ENCODE measurements at regions of chr11 and their contacts with region 1.

Region 1: DNA sequence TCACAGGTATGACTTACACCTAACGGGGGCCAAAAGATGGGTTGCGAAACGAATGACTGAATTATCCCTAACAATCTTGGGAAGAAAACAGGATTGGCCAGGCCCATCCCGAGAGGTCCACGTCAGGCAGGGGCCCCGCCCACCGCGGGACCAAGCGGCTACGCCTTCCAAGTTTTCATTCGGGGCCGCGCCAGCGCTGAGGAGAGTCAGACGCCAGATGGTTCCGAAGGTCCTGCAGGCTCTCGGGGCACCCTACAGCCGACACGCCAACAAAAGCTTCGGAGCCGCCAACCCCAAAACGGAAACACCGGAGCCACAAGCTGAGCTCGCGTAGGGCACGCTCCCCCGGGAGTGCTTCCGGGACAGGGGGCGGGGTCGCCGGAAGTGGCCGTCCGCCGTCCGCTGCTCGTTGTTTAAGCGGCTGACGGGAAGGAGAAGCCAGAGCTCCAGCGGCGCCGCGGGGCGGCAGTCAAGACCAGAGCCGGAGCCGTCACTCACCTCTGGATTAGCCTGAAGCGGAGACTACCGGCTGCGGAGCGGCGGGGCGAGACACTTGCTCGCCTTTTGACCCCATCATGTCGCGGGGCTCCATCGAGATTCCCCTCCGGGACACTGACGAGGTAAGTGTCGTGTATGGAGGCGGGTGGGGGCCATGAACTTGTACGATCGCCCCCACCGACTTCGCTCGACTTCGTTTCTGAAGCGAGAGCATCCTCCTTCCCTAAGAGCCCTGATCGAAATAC is at the start of gene CTR9:
- DNase-seq: peak; percentile 98
- H3K4me3 Mint-ChIP-seq: peak within 1 kb of the TSS; percentile 95
- H3K27ac Mint-ChIP-seq: peak within 1 kb of the TSS; percentile 89
- H3K4me1 Mint-ChIP-seq: peaks cover 32% of the 10 kb centered on the region
- H3K27me3 Mint-ChIP-seq: no peaks in the 10 kb centered on the region
- total RNA-seq, gene CTR9: 43.9 and 44.3 TPM in 2 replicates

Region 2: GRCh38 chr11:9565822-9566560 is 1185.0 kb before region 1 on chr11:
- intact Hi-C with region 1: loop called (anchors 10 kb)
- DNase-seq: peak; percentile 88
- H3K4me3 Mint-ChIP-seq: peak overlapping the region; percentile 52
- H3K27ac Mint-ChIP-seq: peak overlapping the region; percentile 85
- H3K4me1 Mint-ChIP-seq: peaks cover 20% of the 10 kb centered on the region
- H3K27me3 Mint-ChIP-seq: peaks cover 2% of the 10 kb centered on the region

Region 3: DNA sequence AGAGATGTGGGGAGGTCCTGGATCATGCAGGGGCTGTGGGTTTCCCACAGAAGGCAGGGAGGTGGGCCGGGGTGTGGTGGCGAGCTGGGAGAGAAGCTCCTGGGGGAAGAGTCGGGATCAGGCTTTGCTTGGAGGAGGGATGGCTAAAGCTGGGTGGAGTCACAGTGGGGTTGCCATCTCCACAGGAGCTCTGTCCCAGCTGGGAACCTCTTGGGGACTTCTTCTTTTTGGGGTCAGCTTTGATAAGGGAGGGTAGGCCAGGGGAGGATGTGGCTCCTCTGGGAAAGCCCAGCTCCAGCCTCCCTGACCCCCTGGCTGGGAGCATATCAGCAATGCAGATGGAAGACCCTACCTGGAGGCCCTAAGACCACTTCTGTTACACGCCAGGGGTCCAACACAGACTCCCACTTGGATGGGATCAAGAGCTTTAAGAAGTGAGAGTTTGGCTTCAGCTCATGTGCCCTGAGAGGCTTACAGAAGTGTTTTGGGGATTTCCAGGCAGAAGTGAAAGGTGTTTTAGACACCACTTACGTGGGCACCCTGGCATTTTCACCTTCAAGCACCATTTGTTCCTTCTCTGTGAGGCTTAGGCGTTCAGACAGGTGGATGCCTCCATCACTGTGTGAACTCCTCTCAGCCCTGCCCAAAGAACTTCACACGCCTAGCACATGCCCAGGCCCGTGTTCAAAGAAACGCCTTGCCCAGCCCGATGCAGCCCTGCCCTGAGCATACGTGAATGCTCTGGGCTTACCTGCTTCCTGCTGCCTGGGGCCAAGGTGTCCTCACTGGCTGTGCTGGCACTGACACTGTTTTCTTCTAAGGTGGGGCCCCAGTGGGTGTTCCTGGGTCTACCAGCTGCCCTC is 262.2 kb before region 1 on chr11:
- intact Hi-C with region 1: no loop called
- DNase-seq: no peak
- H3K4me3 Mint-ChIP-seq: no peak overlapping the region
- H3K27ac Mint-ChIP-seq: peak overlapping the region; percentile 29
- H3K4me1 Mint-ChIP-seq: peaks cover 15% of the 10 kb centered on the region
- H3K27me3 Mint-ChIP-seq: no peaks in the 10 kb centered on the region

Region 4: DNA sequence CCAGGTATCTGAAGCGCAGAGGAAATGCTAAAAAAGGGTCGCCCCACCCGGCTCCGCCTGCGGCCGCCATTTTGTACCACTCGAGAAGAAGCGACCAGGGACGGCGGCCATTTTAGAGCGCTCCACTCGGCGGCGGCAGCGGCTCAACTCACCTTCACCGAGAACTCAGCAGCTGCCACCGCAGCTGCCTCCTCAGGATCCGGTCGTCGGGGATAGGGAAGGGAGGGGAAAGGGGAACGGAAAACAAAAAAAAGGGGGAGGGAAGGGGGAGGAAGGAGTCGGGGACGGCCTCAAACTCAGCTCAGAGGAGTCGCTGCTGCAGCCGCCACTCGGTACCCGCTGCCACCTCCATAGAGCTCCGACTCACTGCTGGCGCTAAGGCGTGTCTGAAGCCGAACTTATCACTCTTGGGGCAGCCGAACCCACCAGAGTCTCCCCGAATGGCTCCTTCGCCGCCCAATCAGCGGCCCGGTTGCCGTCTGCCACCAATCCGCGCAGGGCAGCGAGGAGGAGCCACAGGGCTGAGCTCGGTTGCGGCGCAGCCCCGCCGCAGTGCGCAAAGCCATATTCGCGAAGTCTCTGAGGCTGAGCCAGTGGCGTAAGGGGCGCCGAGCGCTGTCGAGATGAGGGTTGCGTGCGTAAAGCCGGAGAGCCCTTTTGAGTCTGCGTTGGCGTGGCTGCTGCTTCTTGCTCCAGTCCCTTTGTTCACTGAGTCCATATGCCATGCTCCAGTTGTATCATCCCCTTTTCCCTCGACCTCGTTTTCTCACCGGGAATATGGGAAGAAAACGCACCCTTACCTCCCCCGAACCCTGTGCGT is 57.8 kb after region 1 on chr11 and contains the start of gene EIF4G2:
- intact Hi-C with region 1: loop called (anchors 2 kb)
- DNase-seq: peak; percentile 99
- H3K4me3 Mint-ChIP-seq: peak within 1 kb of the TSS; percentile 95
- H3K27ac Mint-ChIP-seq: peak within 1 kb of the TSS; percentile 98
- H3K4me1 Mint-ChIP-seq: peaks cover 31% of the 10 kb centered on the region
- H3K27me3 Mint-ChIP-seq: no peaks in the 10 kb centered on the region
- total RNA-seq, gene EIF4G2: 1,071 and 1,120 TPM in 2 replicates